CD8-positive, alpha-beta T cell (primary cell): ENCODE measurements at regions of chr6 and their contacts with region 1.

Region 1: GRCh38 chr6:41735427-41736356 is at the start of gene TFEB:
- DNase-seq: peak; percentile 87 to 96 (median 94)
- ATAC-seq: peak; percentile 68
- H3K4me3 ChIP-seq: peak within 1 kb of the TSS; percentile 73 to 75
- H3K4me3 Mint-ChIP-seq: peak within 1 kb of the TSS; percentile 88
- H3K27ac ChIP-seq: peak within 1 kb of the TSS; percentile 48 to 83
- H3K27ac Mint-ChIP-seq: peak within 1 kb of the TSS; percentile 76
- H3K4me1 ChIP-seq: peaks cover 39% of the 10 kb centered on the region
- H3K4me1 Mint-ChIP-seq: peaks cover 33% of the 10 kb centered on the region
- H3K27me3 ChIP-seq: no peaks in the 10 kb centered on the region
- H3K27me3 Mint-ChIP-seq: no peaks in the 10 kb centered on the region
- CTCF ChIP-seq: peak; percentile 67
- total RNA-seq, gene TFEB: 10.2 to 12.7 TPM

Region 2: GRCh38 chr6:41545703-41546474 is 189.8 kb before region 1 on chr6 and contains the start of gene FOXP4:
- CTCF ChIA-PET with region 1: no interaction called
- POLR2A ChIA-PET with region 1: no interaction called
- intact Hi-C with region 1: loop called in 1 of 2 experiments (anchors 5 kb)
- DNase-seq: peak; percentile 60 to 93 (median 84)
- ATAC-seq: peak; percentile 85
- H3K4me3 ChIP-seq: peak within 1 kb of the TSS; percentile 67 to 79
- H3K4me3 Mint-ChIP-seq: peak within 1 kb of the TSS; percentile 94
- H3K27ac ChIP-seq: no peak within 1 kb of the TSS
- H3K27ac Mint-ChIP-seq: peak within 1 kb of the TSS; percentile 77
- H3K4me1 ChIP-seq: peaks cover 28% of the 10 kb centered on the region
- H3K4me1 Mint-ChIP-seq: peaks cover 21% of the 10 kb centered on the region
- H3K27me3 ChIP-seq: peaks cover 18 to 20% of the 10 kb centered on the region in 2 experiments
- H3K27me3 Mint-ChIP-seq: peaks cover 16% of the 10 kb centered on the region
- CTCF ChIP-seq: no peak
- total RNA-seq, gene FOXP4: 9.9 to 11.4 TPM

Region 3: DNA sequence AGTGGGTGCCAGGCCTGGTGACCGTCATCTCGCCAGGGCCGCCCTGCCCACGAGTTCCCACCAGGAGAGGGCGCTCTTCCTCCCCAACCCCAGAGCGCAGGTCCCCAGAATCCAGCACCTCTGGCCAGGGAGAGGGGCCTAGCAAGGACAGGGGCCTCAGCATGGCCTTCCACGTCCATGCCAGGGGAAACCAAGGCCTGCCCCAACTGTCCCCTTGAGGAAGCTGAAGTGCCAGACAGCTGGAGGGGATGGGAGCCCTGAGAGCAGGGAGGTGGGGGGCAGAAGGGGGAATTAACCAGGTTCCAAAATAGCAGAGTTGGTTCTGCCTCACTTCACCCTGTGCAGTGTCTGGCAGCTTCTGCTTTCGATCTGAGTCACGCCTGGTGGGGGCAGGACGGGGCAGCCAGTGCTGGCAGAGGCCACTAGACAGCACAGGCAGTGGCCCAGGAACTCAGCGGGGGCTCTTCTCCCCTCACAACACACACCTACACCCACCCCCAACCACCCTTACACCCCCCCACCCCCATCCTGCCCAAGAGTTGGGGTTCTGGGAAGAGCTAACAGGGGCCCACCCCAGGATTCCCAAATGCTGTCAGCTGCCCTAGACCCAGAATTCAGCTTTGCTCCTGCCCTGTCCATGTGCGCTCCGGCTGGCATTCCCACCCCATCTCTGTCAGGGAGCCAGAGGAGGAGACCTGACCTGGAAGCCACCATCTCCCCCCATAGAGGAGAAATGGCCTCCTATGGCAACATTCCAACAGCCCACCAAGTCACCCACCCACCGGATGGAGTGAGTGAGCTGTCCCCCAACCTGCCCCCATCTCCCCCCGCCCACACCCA is 29.5 kb before region 1 on chr6:
- CTCF ChIA-PET with region 1: interaction called, 12 read pairs
- POLR2A ChIA-PET with region 1: interaction called, 3 read pairs
- intact Hi-C with region 1: loop called (anchors 2 kb)
- DNase-seq: peak; percentile 15 to 83 (median 55)
- ATAC-seq: peak; percentile 70
- H3K4me3 ChIP-seq: no peak overlapping the region
- H3K4me3 Mint-ChIP-seq: no peak overlapping the region
- H3K27ac ChIP-seq: peak overlapping the region in 1 of 2 experiments; percentile 77
- H3K27ac Mint-ChIP-seq: peak overlapping the region; percentile 64
- H3K4me1 ChIP-seq: peaks cover 31% of the 10 kb centered on the region
- H3K4me1 Mint-ChIP-seq: peaks cover 28% of the 10 kb centered on the region
- H3K27me3 ChIP-seq: no peaks in the 10 kb centered on the region
- H3K27me3 Mint-ChIP-seq: no peaks in the 10 kb centered on the region
- CTCF ChIP-seq: peak; percentile 32

Region 4: GRCh38 chr6:41884957-41885356 is 149.3 kb after region 1 on chr6:
- CTCF ChIA-PET with region 1: no interaction called
- POLR2A ChIA-PET with region 1: no interaction called
- intact Hi-C with region 1: no loop called
- DNase-seq: no peak
- ATAC-seq: no peak
- H3K4me3 ChIP-seq: no peak overlapping the region
- H3K4me3 Mint-ChIP-seq: no peak overlapping the region
- H3K27ac ChIP-seq: no peak overlapping the region
- H3K27ac Mint-ChIP-seq: no peak overlapping the region
- H3K4me1 ChIP-seq: no peaks in the 10 kb centered on the region
- H3K4me1 Mint-ChIP-seq: no peaks in the 10 kb centered on the region
- H3K27me3 ChIP-seq: no peaks in the 10 kb centered on the region
- H3K27me3 Mint-ChIP-seq: no peaks in the 10 kb centered on the region
- CTCF ChIP-seq: no peak

Region 5: DNA sequence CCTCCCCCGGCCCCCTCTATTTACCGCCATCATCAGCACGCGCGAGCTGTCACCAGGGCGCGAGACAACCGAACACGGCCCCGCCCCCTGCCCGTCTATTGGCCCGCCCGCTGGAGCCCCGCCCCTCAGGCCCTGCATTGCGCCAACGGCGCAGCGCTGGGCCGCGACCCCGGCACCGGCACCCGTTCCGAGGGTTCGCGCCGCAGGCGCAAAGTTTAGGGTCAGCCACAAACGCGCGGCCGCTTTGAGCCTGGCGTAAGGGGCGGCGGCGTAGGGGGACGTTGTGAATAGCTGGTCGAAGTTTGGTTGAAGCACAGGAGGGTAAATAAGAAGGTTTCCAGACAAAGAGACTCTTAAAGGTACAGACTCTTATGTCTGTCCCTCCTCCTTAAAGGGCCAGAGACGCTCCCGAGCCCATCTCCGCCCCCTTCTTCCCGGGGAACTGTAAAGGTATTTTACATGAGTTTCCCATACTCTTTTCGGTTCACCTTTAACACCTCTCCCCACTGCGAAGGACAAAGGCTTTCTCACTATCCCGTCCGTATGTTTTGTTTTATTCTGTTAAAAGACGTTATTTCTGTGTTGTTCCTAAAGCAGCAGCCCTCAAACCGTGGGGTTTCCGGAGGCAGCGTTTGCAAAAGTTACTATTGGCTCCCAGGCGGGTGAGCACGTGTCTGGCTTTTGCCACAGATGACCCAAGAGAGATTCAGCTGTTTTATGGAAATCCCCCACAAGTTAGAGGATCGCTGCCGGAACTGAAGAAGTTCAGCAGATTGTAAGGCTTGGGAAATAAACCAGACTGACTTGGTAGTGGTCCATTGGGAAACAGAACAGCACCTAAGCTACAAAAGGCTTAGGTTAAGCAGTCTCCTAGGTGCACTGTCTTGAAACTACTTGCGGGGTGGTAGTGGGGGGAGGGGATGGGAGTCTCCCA is 159.9 kb after region 1 on chr6 and contains the start of gene USP49:
- CTCF ChIA-PET with region 1: no interaction called
- POLR2A ChIA-PET with region 1: no interaction called
- intact Hi-C with region 1: loop called in 1 of 2 experiments (anchors 1 kb)
- DNase-seq: peak; percentile 80 to 94 (median 91)
- ATAC-seq: peak; percentile 95
- H3K4me3 ChIP-seq: peak within 1 kb of the TSS; percentile 78 to 90
- H3K4me3 Mint-ChIP-seq: no peak within 1 kb of the TSS
- H3K27ac ChIP-seq: peak within 1 kb of the TSS; percentile 55 to 77
- H3K27ac Mint-ChIP-seq: peak within 1 kb of the TSS; percentile 89
- H3K4me1 ChIP-seq: peaks cover 24% of the 10 kb centered on the region
- H3K4me1 Mint-ChIP-seq: peaks cover 10% of the 10 kb centered on the region
- H3K27me3 ChIP-seq: no peaks in the 10 kb centered on the region
- H3K27me3 Mint-ChIP-seq: no peaks in the 10 kb centered on the region
- CTCF ChIP-seq: no peak
- total RNA-seq, gene USP49: 1.6 to 1.8 TPM

Region 6: GRCh38 chr6:42050266-42051032 is 314.8 kb after region 1 on chr6 and contains the start of gene TAF8:
- CTCF ChIA-PET with region 1: no interaction called
- POLR2A ChIA-PET with region 1: interaction called, 3 read pairs
- intact Hi-C with region 1: loop called in 1 of 2 experiments (anchors 2 kb)
- DNase-seq: peak; percentile 72 to 94 (median 89)
- ATAC-seq: peak; percentile 57
- H3K4me3 ChIP-seq: peak within 1 kb of the TSS; percentile 98 to 99
- H3K4me3 Mint-ChIP-seq: peak within 1 kb of the TSS; percentile 95
- H3K27ac ChIP-seq: peak within 1 kb of the TSS; percentile 80 to 89
- H3K27ac Mint-ChIP-seq: peak within 1 kb of the TSS; percentile 97
- H3K4me1 ChIP-seq: peaks cover 39% of the 10 kb centered on the region
- H3K4me1 Mint-ChIP-seq: peaks cover 66% of the 10 kb centered on the region
- H3K27me3 ChIP-seq: no peaks in the 10 kb centered on the region
- H3K27me3 Mint-ChIP-seq: no peaks in the 10 kb centered on the region
- CTCF ChIP-seq: no peak
- total RNA-seq, gene TAF8: 24.6 to 33.3 TPM

Region 7: DNA sequence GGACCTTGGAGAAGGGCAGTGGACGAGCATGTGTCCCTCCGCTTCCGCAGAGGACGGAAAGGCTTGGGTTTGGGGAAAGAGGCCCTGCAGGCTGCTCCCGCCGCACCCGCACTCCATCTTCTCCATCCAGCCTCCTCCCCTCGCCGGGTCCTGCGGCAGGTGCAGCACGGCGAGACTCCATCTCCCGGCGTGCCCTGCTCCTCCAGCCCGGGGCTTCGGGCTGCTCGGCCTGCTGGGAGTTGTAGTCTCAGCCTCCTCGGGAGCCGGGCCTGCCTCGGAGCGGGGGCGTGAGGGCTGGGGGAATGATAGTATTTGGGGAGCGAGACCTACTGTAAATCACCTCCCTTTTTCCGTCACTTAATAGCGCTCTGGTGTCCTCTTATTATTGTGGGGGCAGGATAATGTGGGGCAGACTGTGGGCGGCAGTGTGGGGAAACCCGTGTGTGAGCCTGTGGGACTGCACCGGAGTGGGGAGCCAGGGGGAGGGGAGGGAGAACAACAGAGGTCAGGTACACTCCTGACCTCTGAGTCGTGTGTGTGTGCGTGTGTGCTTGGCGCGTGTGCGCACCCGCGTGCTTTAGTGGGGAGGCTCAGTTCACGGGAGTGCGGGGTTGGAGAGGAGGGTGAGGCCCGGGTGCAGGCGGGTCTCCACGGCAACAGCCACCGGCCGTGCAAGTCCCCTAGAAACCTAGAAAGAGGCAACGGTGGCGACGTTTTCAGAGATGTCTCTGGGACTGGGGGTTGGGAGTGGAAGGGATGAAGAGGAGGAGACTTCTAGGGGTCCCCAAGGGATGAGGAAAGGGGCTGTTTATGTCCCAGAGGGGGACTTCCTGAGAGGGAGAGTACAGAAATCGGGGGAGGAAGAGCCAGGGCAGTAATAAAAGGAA is 1511.7 kb after region 1 on chr6:
- CTCF ChIA-PET with region 1: no interaction called
- POLR2A ChIA-PET with region 1: no interaction called
- intact Hi-C with region 1: loop called in 1 of 2 experiments (anchors 5 kb)
- DNase-seq: peak; percentile 59 to 87 (median 78)
- ATAC-seq: peak; percentile 95
- H3K4me3 ChIP-seq: peak overlapping the region; percentile 65 to 71
- H3K4me3 Mint-ChIP-seq: no peak overlapping the region
- H3K27ac ChIP-seq: peak overlapping the region; percentile 19 to 40
- H3K27ac Mint-ChIP-seq: peak overlapping the region; percentile 88
- H3K4me1 ChIP-seq: peaks cover 11% of the 10 kb centered on the region
- H3K4me1 Mint-ChIP-seq: peaks cover 15% of the 10 kb centered on the region
- H3K27me3 ChIP-seq: peaks cover 11 to 22% of the 10 kb centered on the region in 2 experiments
- H3K27me3 Mint-ChIP-seq: peaks cover 16% of the 10 kb centered on the region
- CTCF ChIP-seq: no peak

Region 8: GRCh38 chr6:43687437-43688347 is 1952.0 kb after region 1 on chr6 and contains the start of gene MRPS18A:
- CTCF ChIA-PET with region 1: no interaction called
- POLR2A ChIA-PET with region 1: no interaction called
- intact Hi-C with region 1: loop called in 1 of 2 experiments (anchors 2 kb)
- DNase-seq: peak; percentile 47 to 86 (median 77)
- ATAC-seq: peak; percentile 94
- H3K4me3 ChIP-seq: peak within 1 kb of the TSS; percentile 94 to 97
- H3K4me3 Mint-ChIP-seq: peak within 1 kb of the TSS; percentile 95
- H3K27ac ChIP-seq: peak within 1 kb of the TSS; percentile 68 to 72
- H3K27ac Mint-ChIP-seq: peak within 1 kb of the TSS; percentile 88
- H3K4me1 ChIP-seq: peaks cover 25% of the 10 kb centered on the region
- H3K4me1 Mint-ChIP-seq: peaks cover 49% of the 10 kb centered on the region
- H3K27me3 ChIP-seq: no peaks in the 10 kb centered on the region
- H3K27me3 Mint-ChIP-seq: no peaks in the 10 kb centered on the region
- CTCF ChIP-seq: no peak
- total RNA-seq, gene MRPS18A: 43.9 to 44.6 TPM